AG04449 (cell line): ENCODE measurements at regions of chr12 and their contacts with region 1.

Region 1: GRCh38 chr12:6697584-6698351 is 2.8 kb downstream of the PIANP start:
- DNase-seq: no peak
- H3K4me3 ChIP-seq: no peak overlapping the region; the same call in 1 of the 2 replicates
- CTCF ChIP-seq: peak; percentile 83

Region 2: DNA sequence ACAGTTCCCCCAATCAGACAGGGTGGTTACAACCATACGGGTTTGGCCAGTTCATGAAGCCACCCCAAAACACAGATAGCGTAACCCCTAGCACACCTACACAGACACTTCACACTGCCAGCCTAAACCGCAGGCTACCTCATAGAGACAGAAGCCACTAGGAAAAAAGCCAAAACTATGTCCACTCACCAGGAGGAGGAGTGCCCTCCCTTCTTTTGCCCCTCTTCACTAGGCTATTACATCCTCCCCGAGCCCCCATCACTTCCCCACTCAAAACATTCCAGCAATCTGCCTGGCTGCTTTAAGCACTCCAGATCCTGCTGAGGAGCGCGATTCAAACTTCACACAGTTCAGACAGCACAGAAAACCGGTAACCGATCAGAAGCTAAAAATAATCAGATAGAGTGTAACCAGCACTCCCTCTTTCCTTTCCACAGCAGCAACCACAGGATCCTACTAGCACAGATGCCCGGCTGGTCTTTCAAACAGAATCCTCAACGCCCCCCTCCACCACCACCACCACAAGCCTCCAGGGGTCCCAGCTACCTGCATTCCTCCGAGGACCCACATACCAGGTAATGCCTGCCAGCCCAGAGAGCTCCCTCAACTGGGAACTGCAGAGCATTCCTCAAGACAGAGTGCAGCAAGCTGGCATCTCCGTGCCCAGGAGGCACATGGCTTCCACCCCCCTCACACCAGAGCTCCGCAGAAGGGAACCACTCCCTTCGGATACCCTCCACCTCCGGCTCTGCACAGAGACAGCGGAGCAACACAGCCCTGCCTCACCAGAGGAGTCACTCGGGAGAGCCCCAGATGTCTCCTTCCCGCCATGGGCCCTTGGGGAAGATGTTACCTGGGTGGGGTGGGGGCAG is 92.1 kb before region 1 on chr12:
- CTCF ChIA-PET with region 1: interaction called, 12 read pairs
- POLR2A ChIA-PET with region 1: interaction called, 3 read pairs
- DNase-seq: no peak
- H3K4me3 ChIP-seq: peak overlapping the region; percentile 74
- CTCF ChIP-seq: no peak

Region 3: DNA sequence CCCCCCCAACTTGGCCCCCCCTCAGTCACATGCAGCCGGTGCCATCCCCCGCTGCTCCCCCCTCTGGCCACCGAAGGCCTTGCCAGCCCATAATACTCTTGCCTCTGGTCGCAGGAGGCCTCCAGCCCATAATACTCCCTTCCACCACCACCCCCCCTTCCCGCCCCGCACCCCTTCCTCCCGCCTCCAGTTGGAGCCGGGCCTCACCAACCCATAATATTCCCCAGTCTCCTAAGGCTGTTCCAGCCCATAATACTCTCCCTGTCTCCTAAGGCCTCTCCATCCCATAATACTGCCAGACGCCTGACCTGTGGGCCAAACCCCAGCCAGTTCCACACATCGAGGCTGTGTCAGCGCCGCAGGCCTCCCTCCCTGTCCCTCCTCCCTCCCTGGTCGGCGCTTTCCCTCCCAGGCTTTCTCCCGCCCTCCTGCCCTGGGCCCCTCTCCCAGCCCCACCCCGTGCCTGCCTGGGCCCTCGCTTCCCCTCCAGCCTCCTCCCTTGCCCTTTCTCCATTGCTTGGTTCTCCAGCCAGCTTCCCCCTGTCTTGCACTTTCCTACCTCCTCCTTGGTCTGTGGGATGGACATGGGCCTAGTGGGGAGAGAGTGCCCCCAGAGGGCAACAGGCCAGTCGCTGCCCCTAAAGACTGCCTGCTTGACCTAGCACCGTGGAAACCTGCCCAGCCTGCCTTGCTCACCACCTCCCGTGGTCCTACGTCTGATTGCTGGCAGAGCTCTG is 83.8 kb before region 1 on chr12:
- CTCF ChIA-PET with region 1: interaction called, 99 read pairs
- POLR2A ChIA-PET with region 1: no interaction called
- DNase-seq: peak; percentile 83
- H3K4me3 ChIP-seq: no peak overlapping the region
- CTCF ChIP-seq: peak; percentile 11

Region 4: DNA sequence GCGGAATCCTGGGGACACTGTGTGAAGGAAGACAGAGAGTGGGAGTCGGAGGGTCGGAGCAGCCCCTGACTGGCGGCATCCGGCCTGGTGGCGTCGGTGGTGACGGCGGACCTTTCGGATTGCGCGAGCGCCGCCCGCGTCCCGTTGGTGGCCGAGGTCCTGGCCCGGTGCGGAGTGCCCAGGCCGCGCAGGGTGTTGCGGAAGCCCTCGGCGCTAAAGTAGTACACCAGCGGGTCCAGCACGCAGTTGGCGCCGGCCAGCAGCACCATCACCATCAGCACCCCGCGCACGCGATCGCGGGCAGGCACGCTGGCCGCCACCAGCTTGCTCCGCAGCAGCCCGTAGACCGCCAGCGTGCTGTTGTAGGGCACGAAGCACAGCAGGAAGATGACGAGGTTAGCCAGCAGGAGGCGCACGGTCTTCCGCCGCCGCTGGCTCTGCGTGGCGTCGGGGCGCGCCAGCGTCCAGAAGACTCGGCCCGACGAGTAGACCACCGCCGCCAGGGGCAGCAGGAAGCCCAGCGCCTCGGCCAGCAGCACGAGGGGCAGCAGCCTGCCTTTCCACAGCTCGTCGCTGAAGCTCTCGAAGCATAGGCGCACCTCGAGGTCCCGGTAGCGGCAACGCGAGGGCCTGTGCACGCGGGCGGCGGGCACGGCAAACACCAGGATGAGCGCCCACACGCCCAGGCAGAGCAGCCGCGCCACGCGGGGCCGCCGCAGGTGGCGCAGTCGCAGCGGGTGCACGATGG is 77.5 kb before region 1 on chr12:
- CTCF ChIA-PET with region 1: interaction called, 99 read pairs
- POLR2A ChIA-PET with region 1: no interaction called
- DNase-seq: no peak
- H3K4me3 ChIP-seq: peak overlapping the region; percentile 18; the same call in 1 of the 2 replicates
- CTCF ChIP-seq: peak; percentile 73

Region 5: GRCh38 chr12:6723607-6724396 is 26.0 kb after region 1 on chr12 and contains the start of gene COPS7A:
- CTCF ChIA-PET with region 1: interaction called, 14 read pairs
- POLR2A ChIA-PET with region 1: no interaction called
- DNase-seq: peak; percentile 84
- H3K4me3 ChIP-seq: peak within 1 kb of the TSS; percentile 56
- CTCF ChIP-seq: no peak

Region 6: GRCh38 chr12:6810758-6811157 is 113.0 kb after region 1 on chr12:
- CTCF ChIA-PET with region 1: no interaction called
- POLR2A ChIA-PET with region 1: no interaction called
- DNase-seq: no peak
- H3K4me3 ChIP-seq: no peak overlapping the region
- CTCF ChIP-seq: no peak